Right ventricle myocardium inferior (tissue), 1 donor: ENCODE measurements at regions of chr15 and their contacts with region 1.

Region 1: DNA sequence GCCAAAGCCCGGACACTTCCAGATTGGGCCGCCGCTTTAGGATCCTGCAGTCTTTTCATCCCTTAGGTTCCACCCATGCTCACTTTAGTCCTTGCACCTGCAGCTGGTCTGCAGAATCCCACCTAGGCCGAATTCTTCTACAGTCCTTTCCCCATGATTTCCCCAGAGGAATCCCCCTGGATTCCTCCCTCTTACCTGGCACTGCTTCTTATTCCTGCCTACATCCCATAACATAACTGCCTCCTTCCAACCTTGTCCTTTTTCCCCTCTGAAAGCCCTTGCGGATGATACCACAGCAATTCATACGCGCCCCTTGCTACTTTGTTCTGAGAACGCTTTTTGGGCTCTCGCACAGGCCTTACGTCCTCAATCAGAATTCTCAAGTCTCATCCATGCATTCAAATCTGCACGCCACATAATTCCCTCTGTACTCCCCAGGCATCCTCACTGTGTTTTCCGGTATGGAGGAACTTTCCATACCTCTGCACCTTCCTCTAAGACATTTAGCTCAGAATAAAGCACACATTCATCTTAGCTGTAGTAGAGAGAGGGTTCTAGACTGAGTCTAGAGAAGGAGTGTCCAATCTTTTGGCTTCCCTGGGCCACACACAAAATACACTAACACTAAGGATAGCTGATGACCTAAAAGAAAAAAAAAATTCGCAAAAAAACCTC is 619 bp downstream of the EIF2AK4 start:
- DNase-seq: no peak
- ATAC-seq: peak; percentile 1

Region 2: DNA sequence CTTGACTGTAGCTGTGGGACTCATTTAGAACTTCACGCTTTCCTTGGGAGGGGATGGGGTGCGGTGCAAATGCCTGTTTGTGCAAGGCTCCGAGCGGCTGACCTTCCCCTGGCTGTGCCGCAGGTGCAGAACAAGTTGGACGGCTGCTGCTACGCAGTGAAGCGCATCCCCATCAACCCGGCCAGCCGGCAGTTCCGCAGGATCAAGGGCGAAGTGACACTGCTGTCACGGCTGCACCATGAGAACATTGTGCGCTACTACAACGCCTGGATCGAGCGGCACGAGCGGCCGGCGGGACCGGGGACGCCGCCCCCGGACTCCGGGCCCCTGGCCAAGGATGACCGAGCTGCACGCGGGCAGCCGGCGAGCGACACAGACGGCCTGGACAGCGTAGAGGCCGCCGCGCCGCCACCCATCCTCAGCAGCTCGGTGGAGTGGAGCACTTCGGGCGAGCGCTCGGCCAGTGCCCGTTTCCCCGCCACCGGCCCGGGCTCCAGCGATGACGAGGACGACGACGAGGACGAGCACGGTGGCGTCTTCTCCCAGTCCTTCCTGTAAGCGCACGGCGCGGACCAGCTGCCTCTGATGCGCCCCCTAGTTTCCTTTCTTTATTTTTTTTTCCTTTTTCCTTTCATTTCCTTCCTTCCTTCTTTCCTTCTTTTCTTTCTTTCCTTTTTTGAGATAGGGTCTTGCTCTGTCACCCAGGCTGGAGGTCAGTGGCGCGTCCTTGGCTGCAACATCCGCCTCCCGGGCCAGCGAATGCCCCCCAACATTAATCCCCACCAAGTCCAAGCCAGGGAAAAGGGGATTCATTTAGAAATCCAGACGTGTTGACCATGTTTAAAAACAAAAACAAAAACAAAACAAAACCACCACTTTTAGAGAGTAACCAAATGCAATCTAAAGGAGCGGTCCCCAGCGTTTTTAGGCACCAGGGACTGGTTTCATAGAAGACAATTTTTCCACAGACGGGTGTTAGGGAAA is 42.0 kb after region 1 on chr15:
- intact Hi-C with region 1: loop called (anchors 5 kb)
- DNase-seq: peak; percentile 86
- ATAC-seq: peak; percentile 91